HepG2 (cell line): ENCODE measurements at regions of chr2 and their contacts with region 1.

Region 1: DNA sequence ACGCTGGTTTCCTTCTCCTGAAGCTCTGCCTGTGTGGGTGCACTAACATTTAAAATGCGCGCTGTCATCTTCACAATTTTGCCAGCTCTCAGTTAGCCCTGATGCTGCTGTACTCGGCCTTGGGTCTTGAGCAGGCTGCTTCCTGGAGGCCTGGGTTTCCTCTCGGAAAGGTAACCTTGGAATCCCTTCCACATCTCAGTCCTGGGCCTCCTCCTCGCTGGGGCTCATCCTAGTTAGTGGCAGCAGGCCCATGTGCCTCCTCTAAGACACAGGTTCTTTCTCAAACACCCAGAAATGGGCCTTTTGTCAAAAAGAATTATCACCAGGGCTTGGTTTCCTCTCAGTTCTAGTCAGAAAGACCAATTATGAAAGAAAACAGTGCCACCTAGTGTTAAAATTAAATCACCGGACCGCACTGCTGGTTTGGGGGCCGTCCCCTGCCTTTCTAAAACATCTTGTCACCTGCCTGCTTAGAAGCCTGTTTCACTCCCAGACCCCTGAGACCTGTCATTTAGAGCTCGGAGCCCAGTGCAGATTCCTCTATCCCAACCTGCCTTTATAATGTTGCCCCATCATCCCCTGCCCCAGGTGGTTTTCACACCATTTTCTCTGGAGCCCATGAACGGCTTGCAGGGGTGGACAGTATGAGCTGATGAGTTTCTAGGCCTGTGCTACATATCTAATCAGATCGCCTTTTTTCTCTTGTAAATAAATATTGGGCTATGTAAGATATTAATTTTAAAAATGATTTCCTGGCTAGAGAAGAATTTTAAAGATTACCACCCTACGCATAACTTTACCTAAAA is 42.4 kb downstream of the HK2 start:
- DNase-seq: peak; percentile 61
- ATAC-seq: peak; percentile 71
- H3K4me3 ChIP-seq: no peak overlapping the region
- H3K27ac ChIP-seq: no peak overlapping the region
- H3K4me1 ChIP-seq: no peaks in the 10 kb centered on the region
- H3K27me3 ChIP-seq: no peaks in the 10 kb centered on the region
- CTCF ChIP-seq: peak; percentile 75
- EP300 ChIP-seq: no peak
- POLR2A ChIP-seq: no peak
- RAD21 ChIP-seq: peak; percentile 75

Region 2: GRCh38 chr2:74690571-74690970 is 185.7 kb before region 1 on chr2:
- CTCF ChIA-PET with region 1: interaction called, 45 read pairs
- POLR2A ChIA-PET with region 1: interaction called, 3 read pairs
- in situ Hi-C with region 1: loop called (anchors 10 kb)
- intact Hi-C with region 1: loop called (anchors 1 kb)
- DNase-seq: peak; percentile 64
- ATAC-seq: peak; percentile 87
- H3K4me3 ChIP-seq: no peak overlapping the region
- H3K27ac ChIP-seq: no peak overlapping the region
- H3K4me1 ChIP-seq: peaks cover 24% of the 10 kb centered on the region; the same call in 1 of the 2 replicates
- H3K27me3 ChIP-seq: 0 out of 5 replicates have a peak, but pooled peaks cover 0 to 3% of the 10 kb centered on the region in 2 experiments
- CTCF ChIP-seq: peak; percentile 92
- EP300 ChIP-seq: no peak; a peak in 1 of 4 replicates
- POLR2A ChIP-seq: no peak
- RAD21 ChIP-seq: peak; percentile 92